Transverse colon (tissue), 4 donors: ENCODE measurements at regions of chr1 and their contacts with region 1.

Region 1: DNA sequence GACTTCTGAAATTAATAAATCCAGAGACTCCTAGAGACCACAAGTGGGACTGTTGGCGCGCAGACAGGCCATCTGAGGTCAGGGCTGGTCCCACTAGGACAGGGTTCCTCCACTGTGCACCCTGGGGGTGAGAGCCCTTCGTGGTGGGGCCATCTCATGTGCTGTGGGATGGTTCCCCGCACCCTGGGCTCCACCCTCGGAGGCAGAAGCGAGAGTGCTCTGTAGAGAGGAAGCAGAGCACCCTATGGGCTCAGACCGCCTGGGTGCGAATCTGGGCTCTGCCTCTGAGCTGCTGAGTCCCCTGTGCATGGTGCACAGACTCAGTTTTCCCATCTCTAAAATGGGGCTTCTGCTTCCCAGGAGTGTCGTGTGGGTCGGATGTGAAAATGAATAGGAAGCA is 227.3 kb downstream of the NPHP4 start:
- DNase-seq: no peak
- H3K4me3 ChIP-seq: no peak overlapping the region
- H3K27ac ChIP-seq: no peak overlapping the region
- H3K4me1 ChIP-seq: no peaks in the 10 kb centered on the region
- H3K27me3 ChIP-seq: peaks cover 54% of the 10 kb centered on the region
- CTCF ChIP-seq: no peak
- EP300 ChIP-seq: no peak
- POLR2A ChIP-seq: no peak

Region 2: DNA sequence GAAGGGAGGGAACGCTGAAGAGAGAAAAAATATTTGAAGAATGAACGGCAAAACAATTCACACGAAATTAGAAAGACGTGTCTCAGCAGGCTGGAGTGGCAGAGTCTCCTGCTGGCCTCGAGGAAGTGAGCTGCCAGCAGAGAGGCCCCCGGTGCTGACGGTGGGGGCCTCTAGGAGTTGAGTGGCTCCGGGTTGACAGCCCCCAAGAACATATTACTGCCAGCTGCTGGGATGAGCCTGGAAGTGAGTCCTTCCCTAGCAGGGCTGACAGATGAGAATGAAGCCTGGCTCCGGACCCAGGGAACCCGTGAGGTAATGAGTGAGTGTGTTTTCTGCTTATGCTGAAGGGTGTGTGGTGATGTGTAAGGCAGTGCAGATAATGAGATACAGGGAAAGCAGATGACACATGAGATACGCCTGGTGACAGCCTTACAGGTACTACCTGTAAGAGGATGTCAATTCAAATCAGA is 1945.2 kb before region 1 on chr1:
- in situ Hi-C with region 1: no loop called
- intact Hi-C with region 1: loop called (anchors 5 kb)
- DNase-seq: no peak
- H3K4me3 ChIP-seq: no peak overlapping the region
- H3K27ac ChIP-seq: no peak overlapping the region
- H3K4me1 ChIP-seq: no peaks in the 10 kb centered on the region
- H3K27me3 ChIP-seq: no peaks in the 10 kb centered on the region
- CTCF ChIP-seq: no peak
- EP300 ChIP-seq: no peak
- POLR2A ChIP-seq: no peak

Region 3: DNA sequence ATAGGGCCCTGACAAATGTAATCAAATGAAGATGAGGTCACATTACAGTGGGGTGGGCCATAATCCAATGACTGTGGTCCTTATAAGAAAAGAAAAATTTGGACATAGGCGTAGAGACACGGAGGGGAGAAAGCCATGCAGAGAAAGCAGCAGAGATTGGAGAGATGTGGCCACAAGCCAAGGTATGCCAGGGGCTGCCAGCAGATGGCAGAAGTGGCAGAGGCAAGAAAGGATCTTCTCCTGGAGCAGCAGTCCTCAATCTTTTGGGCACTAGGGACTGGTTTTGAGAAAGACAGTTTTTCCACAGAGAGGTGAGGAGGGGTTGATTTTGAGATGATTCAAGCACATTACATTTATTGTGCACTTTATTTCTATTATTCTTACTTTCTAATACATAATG is 127.8 kb before region 1 on chr1:
- in situ Hi-C with region 1: no loop called
- intact Hi-C with region 1: no loop called
- DNase-seq: peak; percentile 39
- H3K4me3 ChIP-seq: no peak overlapping the region
- H3K27ac ChIP-seq: no peak overlapping the region
- H3K4me1 ChIP-seq: peaks cover 0 to 4% (median 0%) of the 10 kb centered on the region in 4 donors
- H3K27me3 ChIP-seq: peaks cover 18% of the 10 kb centered on the region
- CTCF ChIP-seq: peak; percentile 18 to 41 (median 34)
- EP300 ChIP-seq: no peak
- POLR2A ChIP-seq: no peak